ENCODE measurements at regions of chr4 and their contacts with region 1.

Region 1: DNA sequence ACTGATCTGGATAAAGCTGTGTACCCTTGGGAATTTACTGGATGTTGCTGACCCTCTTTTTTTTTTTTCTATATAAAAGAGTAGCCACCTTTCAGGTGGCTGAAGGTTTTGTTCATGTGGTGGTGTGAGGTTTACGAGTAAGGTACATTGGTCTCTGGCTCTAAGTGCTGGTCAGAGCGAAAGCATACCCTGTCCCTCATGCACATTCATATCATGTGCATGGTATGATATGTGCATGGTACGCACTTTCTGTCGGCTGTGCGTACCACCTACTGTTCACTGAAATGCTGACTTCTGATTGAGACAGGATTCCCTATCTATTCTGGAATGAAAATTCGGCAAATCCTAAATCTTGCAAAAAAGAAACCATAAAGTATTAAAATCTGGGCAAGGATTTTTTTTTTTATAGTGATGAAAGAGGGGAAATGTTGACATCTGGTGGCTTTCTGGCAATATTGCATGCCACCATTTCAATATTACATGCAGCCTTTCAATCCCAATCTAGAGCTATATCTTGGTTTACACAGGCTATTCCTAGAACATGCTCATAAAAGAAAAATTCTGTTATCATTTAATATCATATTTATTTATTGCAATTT is 32.8 kb downstream of the FAM149A start:
- DNase-seq: no peak

Region 2: GRCh38 chr4:186067757-186068385 is 69.4 kb before region 1 on chr4:
- intact Hi-C with region 1: loop called in 1 of 2 experiments (anchors 10 kb)
- DNase-seq: no peak

Region 3: GRCh38 chr4:186201535-186202230 is 64.4 kb after region 1 on chr4:
- intact Hi-C with region 1: no loop called
- DNase-seq: no peak

Region 4: GRCh38 chr4:186368281-186368680 is 231.0 kb after region 1 on chr4:
- intact Hi-C with region 1: no loop called
- DNase-seq: no peak

Region 5: DNA sequence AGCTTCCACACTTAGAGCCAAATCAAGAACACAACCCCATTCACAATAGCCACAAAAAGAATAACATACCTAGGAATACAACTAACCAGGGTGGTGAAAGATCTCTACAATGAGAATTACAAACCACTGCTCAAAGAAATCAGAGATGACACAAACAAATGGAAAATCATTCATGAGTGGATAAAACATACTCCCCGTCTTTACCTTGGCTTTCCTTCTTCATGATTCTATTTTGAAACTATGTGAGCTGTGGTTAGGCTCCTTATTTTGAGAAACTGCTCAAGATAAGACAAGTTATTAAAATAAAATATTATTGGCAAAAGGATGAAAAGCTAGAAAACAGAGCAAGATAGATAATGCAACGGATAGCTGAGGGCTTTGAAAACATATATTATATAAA is 1184.4 kb after region 1 on chr4:
- intact Hi-C with region 1: no loop called
- DNase-seq: no peak